ENCODE measurements at regions of chr13 and their contacts with region 1.

Region 1: GRCh38 chr13:36919833-36920615 is at the start of gene SMAD9:
- DNase-seq: peak; percentile 26
- H3K4me3 ChIP-seq: peak within 1 kb of the TSS; percentile 65
- CTCF ChIP-seq: no peak

Region 2: DNA sequence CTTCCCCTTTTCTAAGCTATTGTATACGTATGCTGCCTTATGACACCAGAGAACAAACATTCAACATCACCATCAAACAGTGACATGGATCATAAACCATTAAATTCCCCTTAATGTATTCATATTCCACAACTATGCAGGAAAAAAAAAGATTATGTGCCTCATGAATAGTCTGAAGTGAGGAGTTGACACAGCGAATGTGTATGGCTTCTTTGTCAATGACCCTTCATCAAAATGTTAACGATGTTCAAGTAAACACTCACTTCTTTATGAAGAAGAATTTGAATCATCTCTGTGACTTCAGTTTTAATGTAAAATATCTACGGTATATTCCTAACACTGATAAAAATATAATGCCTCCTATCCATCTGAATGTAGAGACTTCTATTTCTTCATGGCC is 44.6 kb before region 1 on chr13:
- in situ Hi-C with region 1: loop called (anchors 5 kb)
- DNase-seq: no peak
- H3K4me3 ChIP-seq: no peak overlapping the region
- CTCF ChIP-seq: no peak

Measured in astrocyte of the cerebellum (primary cell).